ENCODE measurements at regions of chr13 and their contacts with region 1.

Region 1: GRCh38 chr13:40910324-40911050 is 108.6 kb downstream of the ELF1 start:
- DNase-seq: peak; percentile 54
- H3K4me3 Mint-ChIP-seq: no peak overlapping the region
- H3K27ac Mint-ChIP-seq: peak overlapping the region; percentile 70
- H3K4me1 Mint-ChIP-seq: peaks cover 18% of the 10 kb centered on the region
- H3K27me3 Mint-ChIP-seq: no peaks in the 10 kb centered on the region

Region 2: GRCh38 chr13:40813661-40814454 is 96.6 kb before region 1 on chr13:
- CTCF ChIA-PET with region 1: no interaction called
- POLR2A ChIA-PET with region 1: no interaction called
- intact Hi-C with region 1: loop called (anchors 10 kb)
- DNase-seq: no peak
- H3K4me3 Mint-ChIP-seq: no peak overlapping the region
- H3K27ac Mint-ChIP-seq: no peak overlapping the region
- H3K4me1 Mint-ChIP-seq: peaks cover under 1% of the 10 kb centered on the region
- H3K27me3 Mint-ChIP-seq: no peaks in the 10 kb centered on the region